Activated CD8-positive, alpha-beta memory T cell treated with anti-CD3 and anti-CD28 coated beads, Interleukin-2, amount 10 ng/mL, durations not matched to agents 7 days and 5 days (primary cell): ENCODE measurements at regions of chr19 and their contacts with region 1.

Region 1: GRCh38 chr19:16185123-16185767 is at the start of gene FAM32A:
- DNase-seq: peak; percentile 100
- ATAC-seq: peak; percentile 97
- H3K4me3 Mint-ChIP-seq: peak within 1 kb of the TSS; percentile 97
- H3K27ac Mint-ChIP-seq: peak within 1 kb of the TSS; percentile 96
- H3K4me1 Mint-ChIP-seq: peaks cover 38% of the 10 kb centered on the region
- H3K27me3 Mint-ChIP-seq: no peaks in the 10 kb centered on the region
- total RNA-seq, gene FAM32A: 64.6 to 72.0 TPM

Region 2: DNA sequence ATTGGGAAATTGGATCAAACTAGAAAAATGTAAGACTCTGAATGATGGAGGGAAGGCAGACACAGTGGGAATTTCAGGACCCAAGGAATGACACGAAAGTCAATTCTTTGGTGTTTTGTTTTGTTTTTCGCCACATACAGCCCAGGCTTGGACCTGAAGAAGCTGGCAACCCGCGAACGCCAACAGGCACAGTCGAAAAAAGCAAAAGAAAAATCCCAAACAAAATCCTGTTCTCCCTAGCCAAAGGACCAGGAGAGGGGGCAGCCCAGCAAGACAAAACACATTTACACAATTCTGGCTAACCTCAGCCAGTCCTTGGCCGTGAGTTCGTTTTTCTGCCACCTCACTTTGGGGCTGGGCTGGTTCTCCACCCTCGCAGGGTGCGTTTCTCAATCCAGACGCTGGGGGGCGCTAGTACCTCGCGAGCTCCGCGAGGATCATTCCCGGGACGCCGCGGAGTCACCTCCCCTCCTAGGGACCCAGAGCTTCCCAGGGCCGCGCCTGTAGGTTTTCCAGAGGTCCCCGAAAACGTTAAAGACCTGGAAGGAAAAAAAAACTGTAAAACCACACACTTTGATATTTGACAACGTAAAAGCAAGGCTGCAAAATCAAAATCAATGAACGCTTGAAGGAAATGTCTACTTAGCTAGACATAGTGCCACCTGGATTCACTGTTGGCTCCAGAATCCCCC is 143.8 kb before region 1 on chr19:
- CTCF ChIA-PET with region 1: interaction called, 37 read pairs
- DNase-seq: peak; percentile 81
- ATAC-seq: peak; percentile 86
- H3K4me3 Mint-ChIP-seq: no peak overlapping the region
- H3K27ac Mint-ChIP-seq: no peak overlapping the region
- H3K4me1 Mint-ChIP-seq: peaks cover 17% of the 10 kb centered on the region
- H3K27me3 Mint-ChIP-seq: peaks cover 11% of the 10 kb centered on the region

Region 3: DNA sequence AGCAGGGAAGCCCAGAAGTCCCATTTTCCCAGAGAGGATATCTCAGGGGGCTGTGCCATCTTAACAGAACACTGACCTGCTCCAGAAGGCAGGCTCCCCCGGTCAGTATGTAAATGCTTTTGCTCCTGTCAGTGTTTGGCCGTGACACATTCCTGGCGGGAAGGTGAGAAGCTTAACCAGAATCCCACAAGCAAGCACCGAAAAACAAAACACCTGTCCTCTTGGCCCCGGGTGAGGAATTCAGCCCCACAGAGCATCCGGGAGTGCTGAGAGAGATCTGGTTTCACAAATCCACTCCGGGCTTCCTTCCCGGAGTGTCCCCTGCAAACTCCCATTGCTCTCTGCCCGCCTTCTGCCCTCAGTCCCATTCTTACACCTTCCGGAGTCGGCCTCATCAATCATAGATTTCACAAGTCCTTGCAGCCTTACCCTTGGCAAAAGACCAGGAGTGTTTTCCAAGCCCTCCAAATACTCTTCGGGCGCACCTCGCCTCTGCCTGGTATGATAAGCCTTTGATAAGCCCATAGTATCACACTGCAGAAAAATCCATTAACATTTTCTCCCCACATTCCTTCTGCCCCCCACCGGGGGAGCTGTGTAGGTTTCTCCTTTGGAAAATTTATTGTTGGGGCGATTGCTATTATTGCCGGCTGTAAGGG is 96.8 kb before region 1 on chr19:
- CTCF ChIA-PET with region 1: interaction called, 10 read pairs
- DNase-seq: no peak
- ATAC-seq: no peak
- H3K4me3 Mint-ChIP-seq: no peak overlapping the region
- H3K27ac Mint-ChIP-seq: peak overlapping the region; percentile 56
- H3K4me1 Mint-ChIP-seq: peaks cover 64% of the 10 kb centered on the region
- H3K27me3 Mint-ChIP-seq: no peaks in the 10 kb centered on the region

Region 4: GRCh38 chr19:16118489-16119033 is 66.7 kb before region 1 on chr19:
- CTCF ChIA-PET with region 1: interaction called, 17 read pairs
- DNase-seq: peak; percentile 82
- ATAC-seq: peak; percentile 73
- H3K4me3 Mint-ChIP-seq: peak overlapping the region; percentile 75
- H3K27ac Mint-ChIP-seq: peak overlapping the region; percentile 99
- H3K4me1 Mint-ChIP-seq: peaks cover 89% of the 10 kb centered on the region
- H3K27me3 Mint-ChIP-seq: no peaks in the 10 kb centered on the region

Region 5: GRCh38 chr19:16197622-16198369 is 12.6 kb after region 1 on chr19 and contains the start of gene AP1M1:
- CTCF ChIA-PET with region 1: interaction called, 22 read pairs
- DNase-seq: peak; percentile 99
- ATAC-seq: peak; percentile 94
- H3K4me3 Mint-ChIP-seq: peak within 1 kb of the TSS; percentile 79
- H3K27ac Mint-ChIP-seq: peak within 1 kb of the TSS; percentile 88
- H3K4me1 Mint-ChIP-seq: peaks cover 49% of the 10 kb centered on the region
- H3K27me3 Mint-ChIP-seq: no peaks in the 10 kb centered on the region
- total RNA-seq, gene AP1M1: 144 to 154 TPM

Region 6: DNA sequence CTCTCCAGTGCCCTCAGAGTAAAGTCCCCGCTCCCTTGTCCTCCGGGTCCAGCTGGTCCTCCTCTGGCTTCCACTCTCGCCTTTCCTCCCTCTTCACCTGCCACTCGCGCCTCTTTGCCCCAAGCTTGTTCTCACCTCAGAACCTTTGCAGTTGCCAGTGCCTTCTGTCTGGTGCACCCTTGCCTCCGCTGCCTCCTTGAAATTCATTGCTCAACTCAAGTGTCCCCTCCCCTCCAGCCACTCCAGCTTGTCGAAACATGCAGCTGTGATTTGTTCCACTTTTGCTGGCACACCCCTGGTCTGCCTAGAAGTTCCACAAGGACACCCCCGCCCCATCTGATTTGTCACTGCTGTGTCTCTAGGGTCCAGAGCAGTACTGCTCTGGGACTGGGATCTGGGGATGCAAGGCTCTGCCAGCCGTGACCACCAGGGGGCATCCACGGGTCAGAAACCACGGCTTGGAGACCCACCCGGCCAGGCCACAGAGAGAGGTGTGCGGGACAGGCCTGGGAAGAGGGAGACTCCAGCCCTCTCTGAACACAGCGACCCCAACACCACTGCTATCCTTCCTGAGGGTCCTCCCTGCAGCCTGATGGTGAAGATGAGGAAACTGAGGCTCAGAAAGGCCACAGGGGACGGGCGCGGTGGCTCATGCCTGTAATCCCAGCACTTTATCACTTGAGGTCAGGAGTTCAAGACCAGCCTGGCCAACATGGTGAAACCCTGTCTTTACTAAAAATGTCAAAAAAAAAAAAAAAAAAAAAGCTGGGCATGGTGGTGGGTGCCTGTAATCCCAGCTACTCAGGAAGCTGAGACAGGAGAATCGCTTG is 62.3 kb after region 1 on chr19:
- CTCF ChIA-PET with region 1: no interaction called
- DNase-seq: peak; percentile 87
- ATAC-seq: peak; percentile 94
- H3K4me3 Mint-ChIP-seq: no peak overlapping the region
- H3K27ac Mint-ChIP-seq: peak overlapping the region; percentile 0
- H3K4me1 Mint-ChIP-seq: peaks cover 20% of the 10 kb centered on the region
- H3K27me3 Mint-ChIP-seq: peaks cover 20% of the 10 kb centered on the region